ENCODE measurements at regions of chr1 and their contacts with region 1.

Region 1: DNA sequence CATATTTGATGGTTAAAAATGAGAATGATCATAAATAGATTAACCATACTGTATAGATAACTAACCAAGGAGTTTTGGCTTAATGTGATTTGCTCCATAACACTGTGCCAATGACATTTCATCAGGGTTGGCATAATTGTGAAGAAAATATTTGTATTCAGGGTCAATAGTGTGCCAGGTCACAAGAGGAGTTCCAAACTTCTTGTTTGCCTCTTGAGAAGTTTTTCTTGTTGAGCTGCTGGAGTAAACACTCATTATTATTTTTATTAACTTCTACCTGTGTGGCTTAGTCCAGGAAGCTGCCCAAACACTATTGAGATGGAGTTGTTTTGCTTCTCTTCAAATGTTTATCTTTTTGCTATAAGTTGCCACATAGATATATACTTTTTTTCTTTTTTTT is 7.5 kb downstream of the MAP7D1 start:
- DNase-seq: no peak
- H3K4me3 ChIP-seq: no peak overlapping the region
- H3K4me3 Mint-ChIP-seq: no peak overlapping the region
- H3K27ac Mint-ChIP-seq: no peak overlapping the region
- H3K4me1 ChIP-seq: no peaks in the 10 kb centered on the region
- H3K4me1 Mint-ChIP-seq: peaks cover 18% of the 10 kb centered on the region
- H3K27me3 ChIP-seq: no peaks in the 10 kb centered on the region
- H3K27me3 Mint-ChIP-seq: no peaks in the 10 kb centered on the region
- CTCF ChIP-seq: no peak

Region 2: GRCh38 chr1:36178471-36179219 is 15.2 kb after region 1 on chr1:
- CTCF ChIA-PET with region 1: no interaction called
- POLR2A ChIA-PET with region 1: no interaction called
- intact Hi-C with region 1: no loop called
- DNase-seq: peak in 1 of 2 experiments; percentile 18
- H3K4me3 ChIP-seq: no peak overlapping the region
- H3K4me3 Mint-ChIP-seq: no peak overlapping the region
- H3K27ac Mint-ChIP-seq: no peak overlapping the region
- H3K4me1 ChIP-seq: no peaks in the 10 kb centered on the region
- H3K4me1 Mint-ChIP-seq: no peaks in the 10 kb centered on the region
- H3K27me3 ChIP-seq: no peaks in the 10 kb centered on the region
- H3K27me3 Mint-ChIP-seq: no peaks in the 10 kb centered on the region
- CTCF ChIP-seq: no peak

Region 3: GRCh38 chr1:36269408-36269838 is 106.0 kb after region 1 on chr1:
- CTCF ChIA-PET with region 1: no interaction called
- POLR2A ChIA-PET with region 1: interaction called, 11 read pairs
- intact Hi-C with region 1: no loop called
- DNase-seq: peak; percentile 52 to 62
- H3K4me3 ChIP-seq: no peak overlapping the region
- H3K4me3 Mint-ChIP-seq: peak overlapping the region; percentile 46
- H3K27ac Mint-ChIP-seq: peak overlapping the region; percentile 31
- H3K4me1 ChIP-seq: peaks cover 16% of the 10 kb centered on the region
- H3K4me1 Mint-ChIP-seq: peaks cover 5% of the 10 kb centered on the region
- H3K27me3 ChIP-seq: no peaks in the 10 kb centered on the region
- H3K27me3 Mint-ChIP-seq: no peaks in the 10 kb centered on the region
- CTCF ChIP-seq: no peak

Measured in Caco-2 (cell line).